Posterior cingulate gyrus (tissue), 11 donors: ENCODE measurements at regions of chr5 and their contacts with region 1.

Region 1: GRCh38 chr5:11903614-11904269 is 504 bp downstream of the CTNND2 start:
- DNase-seq: peak; percentile 25 to 92 (median 38)

Region 2: GRCh38 chr5:11268891-11269290 is 634.9 kb before region 1 on chr5:
- intact Hi-C with region 1: loop called (anchors 10 kb)
- DNase-seq: no peak

Region 3: GRCh38 chr5:11719888-11720481 is 183.8 kb before region 1 on chr5:
- intact Hi-C with region 1: loop called (anchors 10 kb)
- DNase-seq: peak in 6 of 10 donors; percentile 54 to 87 (median 76)

Region 4: GRCh38 chr5:11797132-11797531 is 106.6 kb before region 1 on chr5:
- intact Hi-C with region 1: loop called (anchors 5 kb)
- DNase-seq: peak in 8 of 10 donors; percentile 21 to 84 (median 36)